HepG2 (cell line): ENCODE measurements at regions of chr7 and their contacts with region 1.

Region 1: DNA sequence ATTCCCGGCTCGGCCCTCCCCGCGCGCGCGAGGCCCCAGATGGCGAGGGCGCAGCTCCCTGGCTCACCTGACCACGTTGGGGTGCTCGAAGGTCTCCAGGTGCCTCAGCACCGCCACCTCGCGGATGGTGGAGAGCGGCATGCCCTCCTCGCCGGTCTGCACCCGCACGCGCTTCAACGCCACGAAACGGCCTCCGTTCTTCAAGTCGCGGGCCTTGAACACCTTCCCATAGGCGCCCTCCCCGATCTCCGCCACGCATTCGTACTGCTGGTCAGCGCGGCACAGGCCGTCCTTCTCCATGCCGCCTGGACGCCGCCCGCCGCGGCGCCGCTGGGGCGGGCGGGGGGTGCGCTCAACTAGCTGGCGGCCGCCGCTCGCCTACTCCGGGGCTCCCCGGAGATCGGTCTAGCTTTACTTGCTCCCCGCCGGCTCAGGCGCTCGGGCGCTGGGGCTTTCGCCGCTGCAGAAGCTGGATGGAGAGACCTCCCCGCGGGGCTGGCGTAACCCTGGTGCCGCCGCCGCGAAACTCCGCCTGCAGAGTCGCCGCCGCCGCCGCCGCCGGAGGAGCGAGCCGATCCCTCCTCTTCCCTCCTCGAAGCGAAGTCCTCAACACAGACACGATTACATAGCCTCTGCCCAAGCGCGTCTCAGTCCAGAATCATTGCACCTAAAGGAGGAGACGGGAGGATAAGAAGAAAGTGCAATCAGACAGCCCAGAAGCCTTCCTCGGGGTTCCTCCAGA is 3.2 kb downstream of the CDK6 start:
- DNase-seq: peak; percentile 77
- ATAC-seq: peak; percentile 70
- H3K4me3 ChIP-seq: peak overlapping the region; percentile 93 to 99 (median 94)
- H3K27ac ChIP-seq: peak overlapping the region; percentile 94
- H3K4me1 ChIP-seq: peaks cover 47% of the 10 kb centered on the region
- H3K27me3 ChIP-seq: no peaks in the 10 kb centered on the region; a peak in 1 of 5 replicates
- CTCF ChIP-seq: peak; percentile 97
- EP300 ChIP-seq: no peak
- POLR2A ChIP-seq: 0 out of 4 replicates have a peak, but pooled peaks have one; percentile 18 to 32
- RAD21 ChIP-seq: peak; percentile 86

Region 2: GRCh38 chr7:92621026-92621540 is 212.1 kb before region 1 on chr7:
- CTCF ChIA-PET with region 1: interaction called, 12 read pairs
- POLR2A ChIA-PET with region 1: no interaction called
- in situ Hi-C with region 1: loop called (anchors 5 kb)
- intact Hi-C with region 1: no loop called
- DNase-seq: peak; percentile 41
- ATAC-seq: peak; percentile 85
- H3K4me3 ChIP-seq: no peak overlapping the region
- H3K27ac ChIP-seq: peak overlapping the region; percentile 4
- H3K4me1 ChIP-seq: no peaks in the 10 kb centered on the region
- H3K27me3 ChIP-seq: no peaks in the 10 kb centered on the region
- CTCF ChIP-seq: peak; percentile 66
- EP300 ChIP-seq: no peak
- POLR2A ChIP-seq: no peak
- RAD21 ChIP-seq: peak; percentile 53

Region 3: DNA sequence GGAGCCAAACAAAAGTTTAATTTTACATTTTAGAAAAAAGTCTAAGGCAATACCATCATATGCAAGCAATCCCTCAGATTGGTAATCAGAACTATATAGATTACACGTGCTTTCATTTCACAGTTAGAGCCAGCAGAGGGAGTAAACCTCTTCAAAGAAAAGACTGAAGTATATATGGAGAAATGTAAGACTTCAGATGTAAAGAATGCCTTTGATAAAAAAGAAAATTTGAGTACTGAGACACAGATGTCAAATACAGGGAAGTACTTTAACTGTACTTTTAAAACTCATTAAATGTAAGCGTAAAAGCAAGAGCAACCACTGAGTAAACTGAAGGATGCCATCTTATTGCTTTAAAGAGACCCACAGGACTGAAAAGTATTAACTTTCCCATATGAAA is 141.6 kb before region 1 on chr7:
- CTCF ChIA-PET with region 1: interaction called, 10 read pairs
- POLR2A ChIA-PET with region 1: interaction called, 66 read pairs
- in situ Hi-C with region 1: no loop called
- intact Hi-C with region 1: loop called (anchors 1 kb)
- DNase-seq: peak; percentile 68
- ATAC-seq: no peak
- H3K4me3 ChIP-seq: no peak overlapping the region
- H3K27ac ChIP-seq: peak overlapping the region; percentile 23
- H3K4me1 ChIP-seq: peaks cover 55% of the 10 kb centered on the region
- H3K27me3 ChIP-seq: no peaks in the 10 kb centered on the region
- CTCF ChIP-seq: peak; percentile 50; the same call in 1 of the 2 replicates
- EP300 ChIP-seq: no peak
- POLR2A ChIP-seq: no peak
- RAD21 ChIP-seq: peak; percentile 43; the same call in 1 of the 2 replicates

Region 4: DNA sequence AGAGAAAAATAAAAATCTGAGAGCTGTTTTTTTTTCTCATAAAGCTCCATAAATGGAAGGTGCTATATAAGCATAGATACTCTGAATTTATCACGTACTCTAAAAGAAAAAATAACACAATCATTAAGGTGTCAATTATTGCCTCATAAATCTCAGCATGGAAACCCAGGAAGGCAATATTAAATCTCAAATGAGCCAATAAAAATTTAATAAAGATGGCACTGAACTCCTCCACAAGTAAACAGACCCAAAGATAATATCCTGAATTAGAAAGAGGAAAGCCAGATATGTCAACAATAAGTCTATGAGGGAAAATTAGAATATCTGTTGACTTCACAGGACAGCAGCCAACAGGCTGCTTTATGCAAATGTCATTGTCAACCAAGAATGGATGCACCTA is 63.4 kb before region 1 on chr7:
- CTCF ChIA-PET with region 1: no interaction called
- POLR2A ChIA-PET with region 1: no interaction called
- in situ Hi-C with region 1: no loop called
- intact Hi-C with region 1: loop called (anchors 5 kb)
- DNase-seq: no peak
- ATAC-seq: no peak
- H3K4me3 ChIP-seq: no peak overlapping the region
- H3K27ac ChIP-seq: no peak overlapping the region
- H3K4me1 ChIP-seq: peaks cover 31% of the 10 kb centered on the region
- H3K27me3 ChIP-seq: no peaks in the 10 kb centered on the region
- CTCF ChIP-seq: no peak
- EP300 ChIP-seq: no peak
- POLR2A ChIP-seq: no peak
- RAD21 ChIP-seq: no peak

Region 5: DNA sequence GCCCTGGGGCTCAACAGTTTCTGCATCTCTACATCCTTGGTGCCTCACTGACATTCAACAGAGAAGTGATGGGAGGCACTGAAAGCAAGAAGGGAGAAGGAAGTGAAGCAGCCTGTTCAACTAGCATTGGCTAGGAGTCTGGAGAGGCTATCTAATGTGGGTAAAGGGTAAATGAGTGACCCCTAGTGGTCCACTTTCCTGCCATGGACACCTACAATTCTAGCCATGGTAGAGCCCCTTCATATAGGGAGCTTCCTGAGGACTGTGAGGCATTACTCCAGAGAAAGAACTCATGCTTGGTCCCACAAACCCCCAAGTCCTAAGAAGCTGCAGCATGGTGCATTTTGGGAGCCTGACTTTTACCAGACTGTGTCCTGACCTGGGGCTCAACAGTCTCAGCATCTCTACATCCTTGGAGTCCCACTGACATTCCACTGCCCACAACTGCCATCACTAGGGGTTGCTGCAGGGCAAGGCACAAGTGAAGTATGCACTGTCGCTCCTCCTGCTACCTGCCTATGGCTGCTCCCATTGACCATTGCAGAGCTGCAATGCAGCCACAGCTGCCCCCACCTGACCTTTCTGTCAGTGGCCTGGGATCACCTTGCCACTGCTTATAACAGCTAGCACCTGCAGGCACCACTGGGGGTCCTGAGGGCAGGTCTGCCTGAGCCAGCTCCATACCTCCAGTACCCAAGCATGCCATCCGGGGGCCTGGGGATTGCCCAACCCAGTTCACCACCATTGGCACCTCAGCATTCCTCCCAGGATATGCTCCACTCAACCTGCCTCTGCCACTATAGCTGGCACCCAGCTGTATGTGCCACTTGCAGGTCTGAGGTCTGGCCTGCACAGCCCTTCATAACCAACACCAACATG is 47.3 kb after region 1 on chr7:
- CTCF ChIA-PET with region 1: no interaction called
- POLR2A ChIA-PET with region 1: no interaction called
- in situ Hi-C with region 1: no loop called
- intact Hi-C with region 1: loop called (anchors 1 kb)
- DNase-seq: peak; percentile 62
- ATAC-seq: peak; percentile 99
- H3K4me3 ChIP-seq: no peak overlapping the region
- H3K27ac ChIP-seq: no peak overlapping the region
- H3K4me1 ChIP-seq: no peaks in the 10 kb centered on the region
- H3K27me3 ChIP-seq: no peaks in the 10 kb centered on the region
- CTCF ChIP-seq: peak; percentile 64
- EP300 ChIP-seq: no peak
- POLR2A ChIP-seq: no peak
- RAD21 ChIP-seq: peak; percentile 36; the same call in 1 of the 2 replicates